T-cell (primary cell): ENCODE measurements at regions of chr2 and their contacts with region 1.

Region 1: GRCh38 chr2:219645631-219646527 is 18.4 kb downstream of the SLC4A3 start:
- DNase-seq: no peak
- ATAC-seq: no peak
- H3K4me3 ChIP-seq: no peak overlapping the region
- H3K4me3 Mint-ChIP-seq: no peak overlapping the region
- H3K27ac ChIP-seq: no peak overlapping the region
- H3K27ac Mint-ChIP-seq: no peak overlapping the region
- H3K4me1 ChIP-seq: peaks cover 0 to 10% of the 10 kb centered on the region in 2 experiments
- H3K4me1 Mint-ChIP-seq: peaks cover 0 to 7% (median 6%) of the 10 kb centered on the region in 3 donors
- H3K27me3 ChIP-seq: peaks cover 2 to 56% of the 10 kb centered on the region in 2 experiments
- H3K27me3 Mint-ChIP-seq: peaks cover 29 to 63% of the 10 kb centered on the region in 2 donors

Region 2: GRCh38 chr2:219541611-219542180 is 104.2 kb before region 1 on chr2:
- CTCF ChIA-PET with region 1: interaction called, 6 to 13 read pairs
- POLR2A ChIA-PET with region 1: no interaction called
- DNase-seq: peak; percentile 65 to 92 (median 80)
- ATAC-seq: peak; percentile 37 to 45 (median 40)
- H3K4me3 ChIP-seq: peak overlapping the region; percentile 57 to 71
- H3K4me3 Mint-ChIP-seq: peak overlapping the region; percentile 78 to 89 (median 84)
- H3K27ac ChIP-seq: no peak overlapping the region
- H3K27ac Mint-ChIP-seq: no peak overlapping the region
- H3K4me1 ChIP-seq: peaks cover 10 to 33% of the 10 kb centered on the region in 2 experiments
- H3K4me1 Mint-ChIP-seq: peaks cover 24 to 28% (median 27%) of the 10 kb centered on the region in 3 donors
- H3K27me3 ChIP-seq: peaks cover 4 to 14% of the 10 kb centered on the region in 2 experiments
- H3K27me3 Mint-ChIP-seq: peaks cover 0 to 4% of the 10 kb centered on the region in 2 donors

Region 3: DNA sequence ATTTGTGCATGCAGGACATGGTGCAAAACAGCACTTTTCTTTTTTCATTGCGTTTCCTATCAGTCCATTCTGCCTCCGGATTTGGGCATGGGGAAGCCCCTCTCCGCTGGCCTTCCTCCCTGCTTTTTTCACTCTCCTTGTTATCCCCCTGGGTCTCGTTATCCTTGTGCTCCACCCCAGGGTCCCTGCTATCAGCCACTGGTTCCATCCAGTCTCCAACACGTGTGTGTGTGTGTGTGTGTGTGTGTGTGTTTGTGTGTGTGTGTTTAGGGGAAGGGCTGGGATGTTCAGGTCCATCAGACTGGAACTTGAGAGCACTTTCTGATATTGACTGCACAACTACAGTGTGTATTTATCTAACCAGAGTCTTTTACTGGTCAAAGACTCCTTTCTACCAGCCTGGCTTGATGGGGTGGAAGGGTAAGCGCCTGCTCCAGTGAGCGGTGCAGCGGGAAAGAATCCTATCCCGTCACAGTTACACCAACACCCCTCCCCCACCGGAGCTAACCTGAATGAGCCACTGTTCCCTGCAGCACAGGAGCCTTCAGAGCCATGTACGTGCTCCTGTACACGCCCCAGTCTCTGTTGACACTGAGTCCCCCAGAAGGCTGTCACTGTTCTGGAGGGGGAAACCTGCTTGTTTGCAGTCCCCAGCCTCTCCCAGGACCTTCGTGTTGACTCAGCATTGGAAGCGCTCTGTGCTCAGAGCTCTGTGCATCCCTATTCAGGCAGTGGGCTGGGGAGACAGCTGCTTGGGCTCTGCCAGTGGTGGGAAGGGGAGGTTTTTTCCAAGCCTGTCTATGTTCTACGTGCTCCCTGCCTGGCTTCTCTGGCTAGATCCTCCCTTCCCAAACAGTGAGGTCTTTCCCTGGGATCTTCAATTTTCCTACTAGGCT is 69.1 kb before region 1 on chr2:
- CTCF ChIA-PET with region 1: no interaction called
- POLR2A ChIA-PET with region 1: no interaction called
- DNase-seq: no peak
- ATAC-seq: no peak
- H3K4me3 ChIP-seq: no peak overlapping the region
- H3K4me3 Mint-ChIP-seq: no peak overlapping the region
- H3K27ac ChIP-seq: no peak overlapping the region
- H3K27ac Mint-ChIP-seq: no peak overlapping the region
- H3K4me1 ChIP-seq: no peaks in the 10 kb centered on the region
- H3K4me1 Mint-ChIP-seq: peaks cover 0 to 2% (median 0%) of the 10 kb centered on the region in 3 donors
- H3K27me3 ChIP-seq: peaks cover 0 to 49% of the 10 kb centered on the region in 2 experiments
- H3K27me3 Mint-ChIP-seq: peaks cover 24 to 43% of the 10 kb centered on the region in 2 donors

Region 4: GRCh38 chr2:219658196-219658846 is 12.4 kb after region 1 on chr2:
- CTCF ChIA-PET with region 1: interaction called, 8 to 11 read pairs
- POLR2A ChIA-PET with region 1: no interaction called
- DNase-seq: peak in 1 of 35 experiments; percentile 2
- ATAC-seq: no peak
- H3K4me3 ChIP-seq: no peak overlapping the region
- H3K4me3 Mint-ChIP-seq: no peak overlapping the region
- H3K27ac ChIP-seq: no peak overlapping the region
- H3K27ac Mint-ChIP-seq: no peak overlapping the region
- H3K4me1 ChIP-seq: no peaks in the 10 kb centered on the region
- H3K4me1 Mint-ChIP-seq: no peaks in the 10 kb centered on the region
- H3K27me3 ChIP-seq: peaks cover 2 to 5% of the 10 kb centered on the region in 2 experiments
- H3K27me3 Mint-ChIP-seq: peaks cover 31 to 41% of the 10 kb centered on the region in 2 donors